ENCODE measurements at regions of chr22 and their contacts with region 1.

Region 1: GRCh38 chr22:29245637-29246385 is 22.0 kb downstream of the RHBDD3 start:
- DNase-seq: peak; percentile 81
- ATAC-seq: peak; percentile 99
- H3K4me3 Mint-ChIP-seq: no peak overlapping the region
- H3K27ac Mint-ChIP-seq: no peak overlapping the region
- H3K4me1 Mint-ChIP-seq: no peaks in the 10 kb centered on the region
- H3K27me3 Mint-ChIP-seq: peaks cover 4% of the 10 kb centered on the region
- CTCF ChIP-seq: peak; percentile 98

Region 2: DNA sequence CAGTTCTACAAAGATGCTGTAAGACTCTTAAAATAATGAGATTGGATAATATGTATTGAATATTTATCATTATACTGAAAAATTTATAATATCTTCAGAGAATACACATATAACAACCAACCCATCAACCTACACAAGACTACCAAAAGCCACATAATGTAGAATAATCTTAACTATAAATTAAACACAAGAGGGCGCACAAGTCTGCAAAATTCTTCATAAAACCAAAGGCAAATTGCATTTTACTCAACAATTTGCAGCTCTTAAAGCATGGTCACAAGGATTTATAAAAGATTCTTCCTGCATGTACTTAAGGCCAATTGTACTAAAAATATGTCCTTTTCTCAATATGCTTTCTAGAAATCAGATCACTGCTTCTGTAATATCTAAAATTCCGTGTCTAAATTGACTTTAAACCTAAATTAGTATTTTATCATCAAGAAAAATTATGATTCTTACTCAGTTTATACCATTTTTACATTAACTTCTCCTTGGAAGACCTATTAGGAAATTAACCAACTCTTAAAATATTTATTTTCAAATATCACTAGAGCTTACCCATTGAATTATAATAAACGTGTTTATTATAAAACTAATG is 645.2 kb before region 1 on chr22:
- CTCF ChIA-PET with region 1: interaction called, 12 read pairs
- POLR2A ChIA-PET with region 1: no interaction called
- intact Hi-C with region 1: no loop called
- DNase-seq: no peak
- ATAC-seq: no peak
- H3K4me3 Mint-ChIP-seq: no peak overlapping the region
- H3K27ac Mint-ChIP-seq: no peak overlapping the region
- H3K4me1 Mint-ChIP-seq: no peaks in the 10 kb centered on the region
- H3K27me3 Mint-ChIP-seq: peaks cover 18% of the 10 kb centered on the region
- CTCF ChIP-seq: peak; percentile 80

Region 3: DNA sequence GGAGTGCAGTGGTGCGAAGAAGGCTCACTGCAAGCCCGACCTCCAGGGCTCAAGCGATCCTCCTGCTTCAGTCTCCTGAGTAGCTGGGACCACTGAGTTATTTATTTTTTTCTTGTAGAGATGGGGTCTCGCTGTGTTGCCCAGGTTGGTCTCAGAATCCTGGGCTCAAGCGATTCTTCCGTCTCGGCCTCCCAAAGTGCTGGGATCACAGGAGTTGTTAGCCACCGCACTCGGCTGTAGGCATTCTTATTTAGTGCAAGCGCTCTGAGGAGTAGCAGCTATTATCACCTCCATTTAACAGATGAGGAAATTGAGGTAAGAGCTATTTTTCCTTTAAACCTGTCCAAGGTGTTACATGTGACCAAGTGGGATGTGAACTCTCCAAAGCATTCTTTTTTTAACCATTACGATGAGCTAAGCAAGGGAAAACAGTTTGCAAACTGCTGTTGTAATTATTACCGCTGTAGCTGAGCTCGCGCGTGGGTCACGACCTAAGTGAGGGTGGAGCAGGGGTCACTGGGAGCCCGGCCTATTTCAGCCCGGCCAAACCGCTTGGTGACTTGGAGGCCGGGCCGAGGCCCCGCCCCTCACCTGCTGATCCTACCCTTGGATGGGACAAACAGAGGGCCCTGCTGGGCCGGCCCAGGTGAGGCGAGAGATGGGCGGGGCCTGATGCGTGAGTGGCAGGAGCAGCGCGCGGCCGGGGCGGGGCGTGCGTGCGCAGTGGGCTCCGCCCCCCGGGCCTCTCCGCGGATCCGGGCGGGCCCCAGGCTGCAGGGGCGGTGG is 173.4 kb before region 1 on chr22:
- CTCF ChIA-PET with region 1: interaction called, 13 read pairs
- POLR2A ChIA-PET with region 1: interaction called, 5 read pairs
- intact Hi-C with region 1: no loop called
- DNase-seq: peak; percentile 88
- ATAC-seq: peak; percentile 99
- H3K4me3 Mint-ChIP-seq: peak overlapping the region; percentile 64
- H3K27ac Mint-ChIP-seq: no peak overlapping the region
- H3K4me1 Mint-ChIP-seq: peaks cover 20% of the 10 kb centered on the region
- H3K27me3 Mint-ChIP-seq: peaks cover 57% of the 10 kb centered on the region
- CTCF ChIP-seq: no peak

Region 4: DNA sequence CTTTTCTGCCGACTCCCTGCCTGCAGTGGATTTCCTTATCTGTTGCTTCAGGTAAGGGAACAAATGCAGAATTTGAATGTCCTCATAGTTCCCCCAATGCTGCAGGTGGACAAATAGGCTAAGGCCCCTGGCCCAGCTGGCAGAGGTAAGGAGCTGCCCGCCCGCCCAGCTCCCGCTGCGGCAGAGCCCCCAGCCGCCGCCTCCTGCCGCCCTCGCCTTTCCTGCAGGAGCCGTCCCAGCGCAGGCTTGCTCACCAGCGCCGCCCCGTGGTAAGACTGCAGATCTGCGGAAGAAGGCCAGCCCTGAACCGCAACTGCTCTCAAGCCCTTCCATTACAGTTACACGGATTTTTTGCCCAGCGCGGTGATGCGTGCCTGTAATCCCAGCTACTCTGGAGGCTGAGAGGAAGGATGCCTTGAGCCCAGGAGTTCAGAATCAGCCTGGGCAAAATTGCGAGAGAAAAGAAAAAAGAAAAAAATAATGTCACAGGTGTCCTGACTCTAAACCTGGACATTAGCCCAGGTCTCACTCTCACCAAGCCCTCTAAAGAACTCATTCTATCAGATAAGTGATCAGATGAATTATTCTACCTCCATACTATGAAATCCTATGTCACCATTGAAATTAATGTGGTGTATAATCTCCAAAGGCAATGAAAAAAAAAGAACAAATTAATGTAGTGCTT is 91.3 kb before region 1 on chr22:
- CTCF ChIA-PET with region 1: interaction called, 13 read pairs
- POLR2A ChIA-PET with region 1: no interaction called
- intact Hi-C with region 1: no loop called
- DNase-seq: peak; percentile 75
- ATAC-seq: peak; percentile 95
- H3K4me3 Mint-ChIP-seq: no peak overlapping the region
- H3K27ac Mint-ChIP-seq: no peak overlapping the region
- H3K4me1 Mint-ChIP-seq: peaks cover 5% of the 10 kb centered on the region
- H3K27me3 Mint-ChIP-seq: peaks cover 25% of the 10 kb centered on the region
- CTCF ChIP-seq: peak; percentile 94

Region 5: GRCh38 chr22:29231971-29232959 is 13.5 kb before region 1 on chr22:
- CTCF ChIA-PET with region 1: interaction called, 14 read pairs
- POLR2A ChIA-PET with region 1: interaction called, 4 read pairs
- intact Hi-C with region 1: no loop called
- DNase-seq: no peak
- ATAC-seq: no peak
- H3K4me3 Mint-ChIP-seq: no peak overlapping the region
- H3K27ac Mint-ChIP-seq: no peak overlapping the region
- H3K4me1 Mint-ChIP-seq: no peaks in the 10 kb centered on the region
- H3K27me3 Mint-ChIP-seq: no peaks in the 10 kb centered on the region
- CTCF ChIP-seq: no peak

Measured in activated CD8-positive, alpha-beta T cell treated with anti-CD3 and anti-CD28 coated beads for 36 hours (primary cell).